GM23248 (cell line): ENCODE measurements at regions of chr10 and their contacts with region 1.

Region 1: DNA sequence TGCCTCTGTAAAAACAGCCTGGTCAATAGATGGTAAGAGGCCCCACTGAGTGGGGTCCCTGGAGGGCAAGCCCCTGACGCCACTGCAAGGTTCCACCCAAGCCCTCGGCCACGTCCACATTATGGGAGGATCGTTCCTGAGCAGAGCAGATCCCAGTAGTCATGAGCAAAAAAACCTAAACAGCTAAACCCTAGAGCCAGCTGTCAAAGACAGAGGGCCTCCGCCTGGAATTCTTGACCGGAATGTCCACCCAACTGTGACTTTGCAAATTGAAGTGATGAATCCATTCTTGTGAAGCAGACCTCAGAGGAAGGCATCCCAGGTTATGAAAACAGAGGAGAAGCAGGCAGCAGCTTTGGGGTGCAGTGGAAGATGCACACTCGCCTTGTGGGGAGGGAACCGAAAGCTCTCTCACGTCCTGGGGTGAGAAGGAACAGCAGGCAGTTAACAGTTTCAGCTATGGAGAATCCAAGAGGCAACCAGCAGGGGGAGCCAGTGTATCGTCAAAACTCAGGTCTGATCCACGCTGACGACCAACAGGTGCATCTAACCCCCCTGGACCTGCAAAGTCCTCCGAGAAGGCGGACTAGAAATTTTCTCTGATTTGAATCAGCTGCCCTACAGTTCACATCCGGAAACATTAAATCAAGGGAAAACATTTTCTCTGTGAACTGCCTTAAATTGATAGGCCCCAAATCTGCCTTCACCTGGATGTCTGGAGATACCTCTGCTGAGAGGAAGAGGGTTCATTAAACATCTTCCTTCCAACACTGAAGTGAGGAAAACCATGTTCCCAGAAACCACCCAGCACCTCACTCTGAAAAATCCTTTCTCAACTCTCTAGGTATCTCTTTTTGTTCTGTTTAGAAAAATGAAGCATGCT is 139.1 kb upstream of the PFKP start:
- DNase-seq: peak; percentile 67
- H3K4me3 ChIP-seq: no peak overlapping the region
- H3K27ac ChIP-seq: no peak overlapping the region
- H3K4me1 ChIP-seq: no peaks in the 10 kb centered on the region
- H3K27me3 ChIP-seq: peaks cover 25% of the 10 kb centered on the region; the same call in 1 of the 2 replicates

Region 2: GRCh38 chr10:2791774-2792443 is 136.3 kb before region 1 on chr10:
- in situ Hi-C with region 1: no loop called
- DNase-seq: no peak
- H3K4me3 ChIP-seq: no peak overlapping the region
- H3K27ac ChIP-seq: no peak overlapping the region
- H3K4me1 ChIP-seq: no peaks in the 10 kb centered on the region
- H3K27me3 ChIP-seq: no peaks in the 10 kb centered on the region

Region 3: DNA sequence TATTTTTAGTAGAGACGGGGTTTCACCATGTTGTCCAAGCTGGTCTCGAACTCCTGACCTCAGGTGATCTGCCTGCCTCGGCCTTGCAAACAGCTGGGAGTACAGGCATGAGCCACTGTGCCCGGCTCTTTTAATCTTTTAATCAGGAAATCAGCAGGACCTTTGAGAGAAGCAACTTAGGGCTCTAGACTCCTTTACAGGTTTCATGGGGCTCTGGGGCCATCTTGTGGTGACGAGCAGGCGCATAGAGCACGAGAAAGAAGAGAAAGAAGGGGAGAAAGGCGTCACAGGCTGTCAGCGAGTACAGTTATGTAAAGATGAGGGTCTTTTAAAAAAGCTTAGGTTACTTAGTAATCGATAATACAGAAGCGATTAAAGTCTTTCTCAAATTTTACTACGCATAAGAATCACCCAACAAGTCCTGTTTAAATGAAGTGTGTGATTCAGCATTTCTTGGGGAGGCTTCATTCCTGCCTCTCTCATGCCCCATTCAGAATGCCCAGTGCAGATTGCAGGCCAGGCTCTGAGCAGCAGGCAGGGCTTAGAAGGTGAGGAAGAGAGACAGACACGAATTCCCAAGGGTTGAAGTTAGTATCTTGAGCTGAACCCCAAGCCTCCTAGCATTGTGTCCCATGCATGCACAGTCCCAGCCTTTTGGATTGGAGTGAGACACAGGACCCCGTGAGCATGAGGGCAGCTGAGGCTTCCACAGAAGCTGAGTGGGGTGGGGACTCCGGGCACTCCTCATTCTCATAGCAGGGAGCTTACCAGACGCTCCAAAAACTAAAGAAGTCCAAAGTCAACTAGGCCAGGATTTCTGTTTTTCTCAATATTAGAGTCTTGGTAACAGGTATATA is 115.5 kb after region 1 on chr10:
- in situ Hi-C with region 1: loop called (anchors 5 kb)
- DNase-seq: peak; percentile 84
- H3K4me3 ChIP-seq: no peak overlapping the region
- H3K27ac ChIP-seq: no peak overlapping the region
- H3K4me1 ChIP-seq: peaks cover 38% of the 10 kb centered on the region
- H3K27me3 ChIP-seq: 0 out of 2 replicates have a peak, but pooled peaks cover 6% of the 10 kb centered on the region